ENCODE measurements at regions of chr11 and their contacts with region 1.

Region 1: GRCh38 chr11:22304337-22304961 is 33.7 kb upstream of the SLC17A6 start:
- DNase-seq: peak; percentile 52
- H3K4me3 ChIP-seq: no peak overlapping the region
- H3K27ac ChIP-seq: no peak overlapping the region
- H3K4me1 ChIP-seq: no peaks in the 10 kb centered on the region
- H3K27me3 ChIP-seq: no peaks in the 10 kb centered on the region
- CTCF ChIP-seq: peak; percentile 67

Region 2: GRCh38 chr11:21948865-21949264 is 355.6 kb before region 1 on chr11:
- CTCF ChIA-PET with region 1: no interaction called
- POLR2A ChIA-PET with region 1: no interaction called
- intact Hi-C with region 1: no loop called
- DNase-seq: no peak
- H3K4me3 ChIP-seq: no peak overlapping the region
- H3K27ac ChIP-seq: no peak overlapping the region
- H3K4me1 ChIP-seq: no peaks in the 10 kb centered on the region
- H3K27me3 ChIP-seq: no peaks in the 10 kb centered on the region
- CTCF ChIP-seq: no peak

Region 3: DNA sequence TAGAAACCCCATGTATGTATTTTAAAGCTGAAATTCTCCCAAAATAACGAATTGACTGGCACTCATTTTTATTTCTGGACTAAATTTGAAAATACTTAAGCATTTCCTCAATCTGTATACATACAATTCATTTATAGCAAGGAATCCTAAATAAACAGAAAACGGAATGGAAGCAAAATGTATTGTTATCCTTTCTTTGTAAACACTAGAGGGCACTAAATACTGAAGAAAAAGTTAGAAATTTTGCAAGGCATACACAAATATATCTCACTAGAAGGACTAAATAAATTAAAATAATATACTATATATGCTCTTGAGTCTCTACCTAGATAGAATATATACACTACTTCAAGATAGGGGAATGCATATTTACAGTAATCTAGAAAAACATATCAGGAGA is 134.6 kb before region 1 on chr11:
- CTCF ChIA-PET with region 1: interaction called, 5 read pairs
- POLR2A ChIA-PET with region 1: no interaction called
- intact Hi-C with region 1: loop called (anchors 2 kb)
- DNase-seq: no peak
- H3K4me3 ChIP-seq: no peak overlapping the region
- H3K27ac ChIP-seq: no peak overlapping the region
- H3K4me1 ChIP-seq: no peaks in the 10 kb centered on the region
- H3K27me3 ChIP-seq: no peaks in the 10 kb centered on the region
- CTCF ChIP-seq: peak; percentile 54